ENCODE measurements at regions of chr6 and their contacts with region 1.

Region 1: GRCh38 chr6:26342106-26343004 is 22.6 kb upstream of the BTN3A2 start:
- DNase-seq: no peak
- H3K4me3 ChIP-seq: peak overlapping the region in 2 of 3 experiments; percentile 26
- H3K27ac ChIP-seq: no peak overlapping the region
- H3K4me1 ChIP-seq: peaks cover 6% of the 10 kb centered on the region
- H3K27me3 ChIP-seq: no peaks in the 10 kb centered on the region
- CTCF ChIP-seq: no peak

Region 2: DNA sequence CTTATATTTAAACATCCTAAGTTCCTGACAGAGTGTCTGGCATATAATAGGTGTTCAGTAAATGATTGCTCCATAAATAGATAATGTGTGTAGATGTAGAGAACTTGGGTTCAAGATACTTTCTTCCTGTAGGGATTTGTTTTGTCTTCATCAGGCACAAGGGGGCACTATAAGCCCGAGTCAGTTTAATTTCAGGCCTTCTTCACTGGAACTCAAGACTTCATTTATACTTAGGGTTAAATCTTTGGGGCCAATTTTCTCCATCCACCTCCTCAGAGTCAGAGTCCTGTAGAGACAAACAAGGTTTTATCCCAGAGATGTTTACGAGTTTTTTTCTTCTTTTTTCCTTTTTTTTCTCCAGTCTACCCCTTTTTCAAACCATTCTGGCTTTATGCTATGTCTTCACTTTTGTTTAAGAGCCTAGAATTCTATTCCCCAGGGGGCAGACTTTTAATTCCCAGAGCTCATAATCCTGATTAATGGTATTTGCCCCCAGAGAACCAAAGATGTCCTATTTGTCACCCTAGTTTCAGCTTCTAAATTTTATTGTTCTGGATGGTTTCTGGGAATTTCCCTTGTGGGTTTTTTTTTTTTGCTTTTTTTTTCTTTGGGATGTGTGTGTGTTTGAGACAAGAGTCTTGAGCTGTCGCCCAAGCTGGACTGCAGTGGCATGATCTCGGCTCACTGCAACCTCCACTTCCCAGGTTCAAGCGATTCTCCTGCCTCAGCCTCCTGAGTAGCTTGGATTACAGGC is 166.8 kb before region 1 on chr6:
- CTCF ChIA-PET with region 1: no interaction called
- dilution Hi-C with region 1: no loop called
- in situ Hi-C with region 1: no loop called
- intact Hi-C with region 1: loop called (anchors 1 kb)
- DNase-seq: peak; percentile 60
- H3K4me3 ChIP-seq: no peak overlapping the region
- H3K27ac ChIP-seq: no peak overlapping the region
- H3K4me1 ChIP-seq: peaks cover 3% of the 10 kb centered on the region
- H3K27me3 ChIP-seq: no peaks in the 10 kb centered on the region
- CTCF ChIP-seq: peak; percentile 52 to 64

Region 3: GRCh38 chr6:26312501-26313390 is 29.6 kb before region 1 on chr6:
- CTCF ChIA-PET with region 1: no interaction called
- dilution Hi-C with region 1: no loop called
- in situ Hi-C with region 1: no loop called
- intact Hi-C with region 1: no loop called
- DNase-seq: peak; percentile 81
- H3K4me3 ChIP-seq: peak overlapping the region; percentile 60 to 89 (median 70)
- H3K27ac ChIP-seq: peak overlapping the region; percentile 58
- H3K4me1 ChIP-seq: peaks cover 28% of the 10 kb centered on the region
- H3K27me3 ChIP-seq: no peaks in the 10 kb centered on the region
- CTCF ChIP-seq: no peak

Region 4: GRCh38 chr6:26473758-26474438 is 131.5 kb after region 1 on chr6:
- CTCF ChIA-PET with region 1: no interaction called
- dilution Hi-C with region 1: no loop called
- in situ Hi-C with region 1: no loop called
- intact Hi-C with region 1: loop called (anchors 1 kb)
- DNase-seq: peak; percentile 93
- H3K4me3 ChIP-seq: peak overlapping the region; percentile 52 to 72 (median 67)
- H3K27ac ChIP-seq: peak overlapping the region; percentile 87
- H3K4me1 ChIP-seq: peaks cover 16% of the 10 kb centered on the region
- H3K27me3 ChIP-seq: no peaks in the 10 kb centered on the region
- CTCF ChIP-seq: no peak

Region 5: DNA sequence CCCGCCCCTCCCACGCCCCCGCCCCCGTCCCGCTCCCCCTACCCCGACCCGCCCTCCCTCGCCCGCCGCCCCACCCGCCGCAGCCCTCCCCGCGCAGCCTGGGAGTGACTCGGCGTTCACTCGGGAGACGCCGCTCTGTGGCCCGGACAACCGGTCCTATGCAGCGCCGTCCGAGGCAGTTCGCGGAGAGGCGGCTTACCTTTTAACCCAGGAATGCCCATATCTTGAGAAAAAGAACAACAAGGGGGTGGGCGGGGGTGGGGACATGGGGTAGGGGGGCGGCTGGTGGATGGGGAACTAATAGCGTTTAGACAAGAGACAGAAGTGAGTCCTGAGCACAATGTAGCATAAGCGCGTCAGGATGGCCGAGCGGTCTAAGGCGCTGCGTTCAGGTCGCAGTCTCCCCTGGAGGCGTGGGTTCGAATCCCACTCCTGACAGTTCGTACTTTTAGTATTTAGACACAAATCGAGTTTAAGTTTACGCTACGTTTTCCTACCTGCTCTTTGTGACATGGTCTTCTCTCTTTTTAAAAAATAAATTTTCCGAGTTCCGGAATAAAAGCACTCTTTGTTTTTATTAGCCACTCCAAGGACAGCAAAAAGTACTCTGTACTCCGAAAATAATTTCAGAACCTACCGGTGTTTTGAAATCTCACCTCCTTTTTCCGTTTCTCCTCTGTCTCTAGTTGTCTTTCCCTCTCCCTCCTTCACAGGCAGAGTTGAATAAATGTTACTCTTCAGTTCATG is 178.7 kb after region 1 on chr6:
- CTCF ChIA-PET with region 1: no interaction called
- dilution Hi-C with region 1: no loop called
- in situ Hi-C with region 1: no loop called
- intact Hi-C with region 1: no loop called
- DNase-seq: peak; percentile 79
- H3K4me3 ChIP-seq: peak overlapping the region; percentile 54 to 62 (median 55)
- H3K27ac ChIP-seq: peak overlapping the region; percentile 52
- H3K4me1 ChIP-seq: peaks cover 15% of the 10 kb centered on the region
- H3K27me3 ChIP-seq: no peaks in the 10 kb centered on the region
- CTCF ChIP-seq: no peak

Region 6: GRCh38 chr6:26553635-26554446 is 211.5 kb after region 1 on chr6:
- CTCF ChIA-PET with region 1: no interaction called
- dilution Hi-C with region 1: no loop called
- in situ Hi-C with region 1: no loop called
- intact Hi-C with region 1: loop called (anchors 1 kb)
- DNase-seq: peak; percentile 89
- H3K4me3 ChIP-seq: peak overlapping the region; percentile 48 to 56 (median 54)
- H3K27ac ChIP-seq: peak overlapping the region; percentile 23
- H3K4me1 ChIP-seq: peaks cover 20% of the 10 kb centered on the region
- H3K27me3 ChIP-seq: no peaks in the 10 kb centered on the region
- CTCF ChIP-seq: no peak

Region 7: DNA sequence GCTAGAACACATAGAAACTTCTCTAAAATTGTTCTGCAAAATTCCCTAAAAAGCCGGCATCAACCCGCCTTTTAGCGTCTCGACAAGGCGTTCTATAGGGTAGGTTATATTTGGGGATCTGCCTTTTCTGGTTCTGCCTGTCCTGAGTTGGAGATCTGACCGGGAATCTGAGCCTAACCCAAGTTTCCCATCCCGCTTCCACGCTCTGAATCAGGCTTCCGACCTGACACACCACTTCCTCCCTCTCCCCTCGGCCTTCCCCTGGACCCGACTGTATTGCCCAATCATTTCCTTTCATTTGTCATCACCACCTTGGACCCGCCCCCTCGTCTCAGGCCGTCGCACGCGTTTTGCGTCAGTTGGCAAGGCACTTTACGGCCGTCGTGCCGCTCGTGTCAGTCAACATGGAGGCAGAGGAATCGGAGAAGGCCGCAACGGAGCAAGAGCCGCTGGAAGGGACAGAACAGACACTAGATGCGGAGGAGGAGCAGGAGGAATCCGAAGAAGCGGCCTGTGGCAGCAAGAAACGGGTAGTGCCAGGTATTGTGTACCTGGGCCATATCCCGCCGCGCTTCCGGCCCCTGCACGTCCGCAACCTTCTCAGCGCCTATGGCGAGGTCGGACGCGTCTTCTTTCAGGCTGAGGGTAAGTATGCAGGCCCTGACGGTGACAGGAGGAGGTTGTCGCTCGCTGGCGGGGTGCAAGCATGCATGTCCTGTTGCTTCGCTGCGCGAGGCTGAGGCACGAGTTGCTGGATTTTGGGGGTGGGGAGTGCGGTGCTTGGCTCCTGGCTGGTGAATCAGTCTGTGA is 254.4 kb after region 1 on chr6 and contains the start of gene ABT1:
- CTCF ChIA-PET with region 1: interaction called, 16 read pairs
- dilution Hi-C with region 1: no loop called
- in situ Hi-C with region 1: no loop called
- intact Hi-C with region 1: loop called (anchors 1 kb)
- DNase-seq: peak; percentile 98
- H3K4me3 ChIP-seq: peak within 1 kb of the TSS; percentile 61 to 99 (median 89)
- H3K27ac ChIP-seq: peak within 1 kb of the TSS; percentile 68
- H3K4me1 ChIP-seq: peaks cover 19% of the 10 kb centered on the region
- H3K27me3 ChIP-seq: no peaks in the 10 kb centered on the region
- CTCF ChIP-seq: no peak
- total RNA-seq, gene ABT1: 14.2 to 15.9 TPM